PC-9 (cell line): ENCODE measurements at regions of chr1 and their contacts with region 1.

Region 1: DNA sequence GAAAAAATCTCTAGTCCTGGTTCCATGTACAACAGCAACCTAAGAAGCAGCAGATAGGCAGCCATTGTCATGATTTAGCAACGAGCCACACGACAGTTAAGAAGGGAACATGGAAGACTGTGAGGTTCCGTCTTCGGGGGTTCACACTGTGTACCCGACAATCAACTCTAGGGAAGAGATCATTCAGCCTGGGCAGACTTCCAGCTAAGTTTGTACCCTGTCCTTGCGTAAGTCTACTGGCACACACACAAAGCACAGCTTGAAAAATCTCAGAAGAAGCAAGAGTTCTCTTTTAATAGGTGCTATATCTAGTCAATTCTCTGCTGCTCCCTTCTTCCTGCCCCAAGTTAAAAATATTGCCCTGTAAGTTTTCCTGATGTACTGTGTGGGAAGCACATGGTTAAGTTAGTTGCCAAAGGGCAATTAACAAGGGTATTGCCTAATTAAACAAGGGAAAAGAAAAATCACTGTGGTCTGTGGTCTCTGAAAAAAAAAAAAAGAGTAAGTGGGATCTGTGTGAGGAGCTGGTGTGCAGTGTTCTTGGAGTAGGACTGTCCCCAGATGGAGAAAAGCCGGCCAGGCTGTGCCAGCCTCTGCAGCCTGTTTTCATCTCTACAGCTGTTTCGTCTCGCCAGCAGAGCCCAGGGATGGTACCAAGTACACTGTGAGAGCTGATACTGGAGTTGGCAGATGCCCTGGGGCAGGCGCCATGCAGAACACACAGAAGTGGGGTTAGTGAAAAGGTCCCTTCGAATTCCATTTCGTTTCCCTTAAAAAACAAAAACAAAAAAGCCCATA is 6.4 kb upstream of the MYBPHL start:
- DNase-seq: no peak
- H3K4me3 ChIP-seq: no peak overlapping the region
- H3K27ac ChIP-seq: no peak overlapping the region
- H3K4me1 ChIP-seq: no peaks in the 10 kb centered on the region
- H3K27me3 ChIP-seq: no peaks in the 10 kb centered on the region
- CTCF ChIP-seq: no peak

Region 2: GRCh38 chr1:109151164-109151990 is 161.8 kb before region 1 on chr1:
- CTCF ChIA-PET with region 1: interaction called, 12 read pairs
- POLR2A ChIA-PET with region 1: no interaction called
- intact Hi-C with region 1: no loop called
- DNase-seq: peak; percentile 36 to 41
- H3K4me3 ChIP-seq: no peak overlapping the region
- H3K27ac ChIP-seq: no peak overlapping the region
- H3K4me1 ChIP-seq: peaks cover 8% of the 10 kb centered on the region; the same call in 1 of the 2 replicates
- H3K27me3 ChIP-seq: no peaks in the 10 kb centered on the region
- CTCF ChIP-seq: no peak